ENCODE measurements at regions of chr2 and their contacts with region 1.

Region 1: DNA sequence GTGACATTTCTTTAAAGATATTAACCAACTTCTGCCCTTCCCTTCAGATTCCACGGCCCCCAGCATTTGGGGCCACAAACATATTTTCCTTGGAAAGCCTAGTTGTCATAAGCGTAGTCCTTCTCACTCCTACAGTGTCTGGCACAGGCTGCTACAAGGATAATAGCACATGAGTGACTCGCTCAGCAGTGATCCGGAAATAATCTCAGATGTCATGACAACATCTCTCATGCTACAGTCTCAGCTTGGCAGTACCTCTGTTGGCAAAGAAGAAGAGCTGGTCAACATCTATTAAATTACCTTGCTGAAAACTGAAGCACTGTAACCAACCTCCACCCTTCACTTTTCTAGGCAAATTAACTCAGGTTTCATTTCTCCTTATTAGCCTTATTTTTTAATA is 351.7 kb downstream of the RAD51AP2 start:
- DNase-seq: no peak

Region 2: DNA sequence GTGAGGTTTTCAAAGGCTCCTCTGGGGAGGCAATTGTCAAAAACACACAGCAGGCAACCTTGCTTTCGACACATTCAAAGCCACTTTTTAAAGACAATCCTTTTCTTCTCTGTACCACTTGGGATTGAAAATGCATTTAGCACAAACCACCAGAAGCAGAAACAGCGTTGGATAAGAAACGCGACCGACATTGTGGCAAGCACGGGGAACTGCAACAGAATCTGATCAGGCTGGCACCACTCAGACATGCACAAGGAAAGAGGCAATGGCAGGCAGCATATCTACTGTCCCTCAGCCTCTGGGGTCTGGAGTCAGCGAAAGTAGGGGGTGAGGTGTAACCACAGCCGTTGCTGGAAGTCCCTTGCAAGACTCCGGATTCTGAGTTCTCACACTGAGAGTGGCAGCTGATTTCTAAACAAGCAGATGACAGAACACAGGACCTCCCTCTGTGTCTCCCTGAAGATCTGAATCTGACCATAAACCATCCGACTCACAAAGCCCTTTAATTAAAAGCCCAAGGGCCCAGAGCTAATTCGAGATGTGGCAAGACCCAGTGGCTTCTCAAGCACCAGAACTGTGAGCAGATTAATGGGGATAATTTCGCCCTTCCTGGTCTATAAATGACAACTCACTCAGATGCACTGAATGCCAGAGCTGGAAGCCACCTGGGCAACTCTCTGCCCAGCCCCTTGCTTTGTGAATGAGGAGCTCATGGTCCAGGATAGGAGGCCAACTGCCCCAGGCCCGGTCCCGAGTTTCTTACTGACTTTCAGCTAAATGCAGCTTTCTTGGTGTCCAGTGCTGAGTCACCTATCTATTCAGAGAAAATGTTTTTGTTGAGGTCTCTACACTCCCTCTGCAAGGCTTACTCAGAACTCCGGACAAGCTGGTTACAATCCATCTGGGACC is 530.5 kb before region 1 on chr2:
- intact Hi-C with region 1: loop called in 1 of 2 experiments (anchors 5 kb)
- DNase-seq: no peak